ENCODE measurements at regions of chr2 and their contacts with region 1.

Region 1: DNA sequence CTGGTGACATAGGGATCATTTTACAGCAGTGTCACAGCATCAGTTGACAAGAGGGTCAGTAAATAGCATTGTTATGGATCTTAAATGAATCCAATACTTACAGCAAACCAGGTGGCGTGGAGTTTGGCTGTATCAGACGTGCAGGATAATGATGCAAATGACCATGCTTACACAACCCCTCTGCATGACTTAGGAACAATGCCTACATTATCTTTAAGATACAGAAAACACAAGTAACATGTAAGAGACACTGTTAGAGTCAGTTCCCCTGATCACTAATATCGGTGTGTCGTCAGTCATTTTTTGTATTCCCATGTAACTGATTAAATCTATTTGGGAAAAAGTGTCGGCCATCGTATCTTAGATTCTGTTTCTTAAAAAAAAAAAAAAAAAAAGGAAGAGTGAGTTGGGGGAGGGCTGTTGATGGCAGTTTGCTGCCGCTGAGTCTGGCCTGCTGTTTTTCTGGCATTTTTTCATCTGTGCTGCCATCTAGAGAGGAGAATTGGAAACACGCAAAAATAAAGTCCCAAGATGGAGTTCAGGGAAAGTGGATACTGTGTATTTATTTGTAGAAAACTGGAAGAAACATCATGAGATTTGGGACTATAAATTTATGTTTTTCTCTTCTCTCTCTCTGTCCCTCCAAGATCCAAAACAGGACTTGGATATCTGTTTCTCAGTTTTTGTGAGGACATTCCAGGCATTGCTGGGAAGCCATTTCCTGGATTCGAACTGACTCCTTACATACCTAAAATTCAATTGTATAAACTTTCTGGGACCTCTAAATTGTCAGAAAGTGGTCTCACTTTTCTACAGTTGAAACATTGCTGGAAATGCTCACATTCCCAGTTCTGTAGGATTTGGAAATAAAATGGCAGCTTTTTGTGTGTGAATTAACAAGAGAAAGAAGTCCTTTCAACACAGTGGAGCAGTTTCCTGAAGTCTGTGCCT is 60.3 kb upstream of the AGPS start:
- DNase-seq: peak; percentile 45
- H3K4me3 Mint-ChIP-seq: no peak overlapping the region
- H3K27ac Mint-ChIP-seq: no peak overlapping the region
- H3K4me1 Mint-ChIP-seq: peaks cover 16% of the 10 kb centered on the region
- H3K27me3 Mint-ChIP-seq: no peaks in the 10 kb centered on the region

Region 2: GRCh38 chr2:176682278-176682677 is 650.0 kb before region 1 on chr2:
- intact Hi-C with region 1: no loop called
- DNase-seq: no peak
- H3K4me3 Mint-ChIP-seq: no peak overlapping the region
- H3K27ac Mint-ChIP-seq: no peak overlapping the region
- H3K4me1 Mint-ChIP-seq: no peaks in the 10 kb centered on the region
- H3K27me3 Mint-ChIP-seq: peaks cover 19% of the 10 kb centered on the region

Region 3: DNA sequence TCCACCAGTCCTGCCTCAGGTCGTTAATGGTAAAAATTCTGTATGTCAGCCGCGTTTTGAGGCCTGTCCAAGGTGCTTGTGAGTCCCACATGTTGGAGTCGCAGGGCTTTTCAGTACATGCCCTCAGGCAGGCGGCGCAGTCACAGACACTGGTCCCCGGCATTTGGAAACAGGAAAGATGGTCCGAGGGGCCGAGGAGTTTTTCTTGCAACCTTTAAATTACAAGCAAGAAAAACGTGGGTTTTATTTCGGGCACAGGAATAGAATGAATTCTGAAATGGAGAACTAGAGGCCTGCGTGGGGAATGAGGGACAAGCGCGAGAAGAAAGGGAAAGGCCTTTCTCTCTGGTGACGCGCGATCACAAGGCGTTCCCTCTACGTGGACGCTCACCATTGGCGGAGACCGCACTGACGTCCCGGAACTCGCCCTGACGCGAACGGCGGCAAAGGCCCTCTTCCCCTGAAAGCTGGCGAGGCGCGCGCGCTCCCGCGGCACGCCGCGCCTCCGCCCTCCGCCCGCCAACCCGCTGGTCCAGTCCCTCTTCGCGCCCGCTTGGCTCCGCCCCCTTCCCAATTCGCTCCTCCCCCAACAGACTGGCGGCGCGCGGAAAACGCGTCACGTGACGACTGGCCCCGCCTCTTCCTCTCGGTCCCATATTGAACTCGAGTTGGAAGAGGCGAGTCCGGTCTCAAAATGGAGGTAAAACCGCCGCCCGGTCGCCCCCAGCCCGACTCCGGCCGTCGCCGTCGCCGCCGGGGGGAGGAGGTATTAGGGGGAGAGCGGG is 120.0 kb before region 1 on chr2 and contains the start of gene HNRNPA3:
- intact Hi-C with region 1: loop called (anchors 1 kb)
- DNase-seq: peak; percentile 100
- H3K4me3 Mint-ChIP-seq: peak within 1 kb of the TSS; percentile 97
- H3K27ac Mint-ChIP-seq: peak within 1 kb of the TSS; percentile 99
- H3K4me1 Mint-ChIP-seq: peaks cover 58% of the 10 kb centered on the region
- H3K27me3 Mint-ChIP-seq: no peaks in the 10 kb centered on the region
- total RNA-seq, gene HNRNPA3: 326 and 333 TPM in 2 replicates

Region 4: DNA sequence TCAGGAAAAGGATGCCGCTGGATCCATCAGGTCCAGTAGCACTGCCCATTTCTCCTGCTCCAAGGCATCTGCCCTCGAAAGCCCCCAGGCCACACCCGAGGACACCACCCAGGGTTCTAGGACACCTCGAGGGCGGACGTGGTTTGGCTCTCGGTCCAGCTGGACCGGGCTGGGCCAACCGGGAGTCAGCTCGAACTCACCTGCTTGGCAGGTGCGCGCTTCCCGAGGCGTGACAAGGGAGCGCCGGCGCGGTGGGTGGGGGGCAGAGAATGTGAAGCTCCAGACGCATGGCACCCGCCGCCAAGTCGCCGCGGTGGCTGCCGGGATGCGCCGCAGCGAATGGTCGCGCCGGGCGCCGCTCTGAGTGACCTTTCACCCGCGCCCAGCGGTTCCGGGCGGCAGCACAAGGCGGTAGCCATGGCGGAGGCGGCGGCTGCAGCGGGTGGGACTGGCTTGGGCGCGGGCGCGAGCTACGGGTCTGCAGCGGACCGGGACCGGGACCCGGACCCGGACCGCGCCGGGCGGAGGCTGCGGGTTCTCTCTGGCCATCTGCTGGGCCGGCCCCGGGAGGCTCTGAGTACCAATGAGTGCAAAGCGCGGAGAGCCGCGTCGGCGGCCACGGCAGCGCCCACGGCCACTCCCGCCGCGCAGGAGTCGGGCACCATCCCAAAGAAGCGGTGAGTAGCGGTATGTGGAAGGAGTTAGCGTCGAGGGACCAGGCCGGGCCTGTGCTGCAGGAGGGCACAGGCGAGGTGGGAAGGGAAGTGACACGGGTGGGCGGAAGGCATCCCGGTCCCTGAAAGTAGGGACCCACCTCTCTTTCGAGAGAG is 60.3 kb after region 1 on chr2 and contains the start of gene AGPS:
- intact Hi-C with region 1: loop called (anchors 1 kb)
- DNase-seq: peak; percentile 80
- H3K4me3 Mint-ChIP-seq: peak within 1 kb of the TSS; percentile 90
- H3K27ac Mint-ChIP-seq: peak within 1 kb of the TSS; percentile 92
- H3K4me1 Mint-ChIP-seq: peaks cover 58% of the 10 kb centered on the region
- H3K27me3 Mint-ChIP-seq: no peaks in the 10 kb centered on the region
- total RNA-seq, gene AGPS: 70.1 and 71.8 TPM in 2 replicates

Region 5: GRCh38 chr2:177604271-177605065 is 272.2 kb after region 1 on chr2:
- intact Hi-C with region 1: loop called (anchors 1 kb)
- DNase-seq: no peak
- H3K4me3 Mint-ChIP-seq: no peak overlapping the region
- H3K27ac Mint-ChIP-seq: no peak overlapping the region
- H3K4me1 Mint-ChIP-seq: peaks cover 3% of the 10 kb centered on the region
- H3K27me3 Mint-ChIP-seq: peaks cover 1% of the 10 kb centered on the region

Region 6: DNA sequence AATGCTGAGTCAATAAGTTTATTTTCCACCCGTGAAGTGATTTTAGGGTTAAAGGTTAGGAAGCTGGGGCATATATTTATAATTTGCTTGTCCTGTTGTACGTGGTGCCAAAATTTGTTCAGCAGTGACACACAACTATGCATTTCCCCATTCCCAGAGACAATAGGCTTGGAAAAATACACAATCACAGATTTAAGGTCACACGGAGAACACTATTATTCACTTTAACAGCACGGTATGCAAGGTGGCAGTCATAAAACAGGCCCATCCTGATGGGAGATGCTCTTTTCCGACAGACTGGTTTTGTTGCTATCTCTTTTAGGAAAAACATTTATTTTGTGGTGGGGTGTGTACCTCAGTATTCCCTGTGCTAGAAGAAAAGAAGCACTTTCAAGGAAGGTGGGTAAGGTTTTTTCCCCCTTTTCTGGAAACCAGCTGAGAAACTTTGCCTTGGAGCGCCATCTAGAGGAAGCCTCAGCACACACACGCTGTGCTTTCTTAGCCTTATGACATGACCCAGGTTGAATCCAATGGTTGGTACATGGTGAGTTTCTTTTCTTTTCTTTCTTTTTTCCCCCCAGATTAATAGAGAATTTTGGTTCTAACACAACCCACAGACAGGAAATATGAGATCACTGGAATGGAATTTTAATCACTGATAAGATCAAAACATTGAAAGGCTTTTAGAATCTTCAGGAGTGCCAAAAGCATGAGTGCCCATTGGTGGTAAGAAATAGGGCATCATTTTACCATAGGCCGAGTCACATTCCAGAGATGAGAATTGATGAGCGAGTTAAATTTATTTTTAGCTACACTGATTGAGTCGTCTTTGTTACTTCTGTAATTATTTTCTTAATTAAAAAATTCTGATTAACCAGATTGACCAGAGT is 392.3 kb after region 1 on chr2:
- intact Hi-C with region 1: loop called (anchors 1 kb)
- DNase-seq: peak; percentile 16
- H3K4me3 Mint-ChIP-seq: no peak overlapping the region
- H3K27ac Mint-ChIP-seq: no peak overlapping the region
- H3K4me1 Mint-ChIP-seq: no peaks in the 10 kb centered on the region
- H3K27me3 Mint-ChIP-seq: peaks cover 24% of the 10 kb centered on the region